Heart right ventricle (tissue), 16 donors: ENCODE measurements at regions of chr12 and their contacts with region 1.

Region 1: GRCh38 chr12:121536899-121537813 is 43.7 kb downstream of the KDM2B start:
- DNase-seq: peak; percentile 89 to 90
- ATAC-seq: peak; percentile 82 to 90 (median 86)
- H3K4me3 ChIP-seq: peak overlapping the region; percentile 56 to 94 (median 77)
- H3K27ac ChIP-seq: peak overlapping the region; percentile 87 to 100 (median 96)
- H3K4me1 ChIP-seq: peaks cover 12 to 63% (median 48%) of the 10 kb centered on the region in 9 donors
- H3K27me3 ChIP-seq: no peaks in the 10 kb centered on the region
- CTCF ChIP-seq: no peak

Region 2: GRCh38 chr12:121114019-121114639 is 423.0 kb before region 1 on chr12:
- intact Hi-C with region 1: no loop called
- DNase-seq: no peak
- ATAC-seq: no peak
- H3K4me3 ChIP-seq: no peak overlapping the region
- H3K27ac ChIP-seq: no peak overlapping the region
- H3K4me1 ChIP-seq: peaks cover 0 to 7% (median 0%) of the 10 kb centered on the region in 9 donors
- H3K27me3 ChIP-seq: no peaks in the 10 kb centered on the region
- CTCF ChIP-seq: no peak

Region 3: DNA sequence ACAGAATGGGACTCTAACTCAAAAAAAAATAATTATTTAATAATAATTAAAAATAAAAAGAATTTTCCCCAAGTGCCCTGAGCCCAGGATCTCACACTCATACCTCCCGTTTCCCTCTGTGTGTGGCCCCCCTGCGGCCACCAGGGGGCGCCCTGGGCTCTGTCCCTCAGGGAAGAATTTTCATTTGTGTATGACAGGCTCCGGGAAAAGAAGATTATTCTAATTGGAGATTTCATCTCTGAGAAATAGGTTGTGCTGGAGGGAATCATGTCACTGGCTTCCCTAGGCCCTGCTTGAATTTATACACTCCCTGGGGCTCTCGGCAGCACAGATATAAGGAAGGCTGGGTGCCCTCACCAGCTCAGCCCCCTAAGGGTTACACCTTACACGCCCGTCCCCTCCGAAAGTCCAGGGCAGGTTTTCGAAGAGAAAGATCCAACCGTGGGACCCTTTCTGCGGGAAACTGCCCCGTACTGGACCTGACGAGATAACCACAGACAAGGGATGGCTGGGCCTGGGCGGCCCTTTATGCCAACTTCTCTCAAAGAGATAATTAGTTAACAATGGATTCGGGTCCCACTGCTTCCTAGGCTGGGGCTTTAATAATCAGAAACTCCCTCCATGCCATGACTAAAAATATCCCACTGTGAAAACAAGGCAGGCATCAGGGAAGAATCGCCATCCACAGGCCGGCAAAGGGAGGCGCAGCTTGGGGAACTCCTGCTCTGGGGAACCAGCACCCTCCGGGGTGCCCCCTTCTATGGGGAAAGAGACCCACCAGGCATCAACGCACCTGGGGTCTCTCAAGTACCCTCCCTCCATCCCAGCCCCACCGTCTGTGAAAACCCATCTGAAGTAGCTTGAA is 37.0 kb before region 1 on chr12:
- intact Hi-C with region 1: loop called in 4 of 10 experiments (anchors 2 to 5 kb)
- DNase-seq: peak; percentile 79 to 81
- ATAC-seq: peak; percentile 81 to 93 (median 88)
- H3K4me3 ChIP-seq: peak overlapping the region in 9 of 10 donors; percentile 10 to 45 (median 36)
- H3K27ac ChIP-seq: peak overlapping the region in 9 of 10 donors; percentile 50 to 85 (median 78)
- H3K4me1 ChIP-seq: peaks cover 0 to 28% (median 12%) of the 10 kb centered on the region in 9 donors
- H3K27me3 ChIP-seq: no peaks in the 10 kb centered on the region
- CTCF ChIP-seq: peak; percentile 96 to 99 (median 99)

Region 4: GRCh38 chr12:121579981-121580868 is 43.1 kb after region 1 on chr12:
- intact Hi-C with region 1: loop called in 1 of 10 experiments (anchors 5 kb)
- DNase-seq: peak; percentile 68 to 77
- ATAC-seq: peak; percentile 57 to 76 (median 70)
- H3K4me3 ChIP-seq: peak overlapping the region; percentile 42 to 92 (median 74)
- H3K27ac ChIP-seq: peak overlapping the region; percentile 66 to 93 (median 84)
- H3K4me1 ChIP-seq: peaks cover 13 to 57% (median 48%) of the 10 kb centered on the region in 9 donors
- H3K27me3 ChIP-seq: no peaks in the 10 kb centered on the region
- CTCF ChIP-seq: no peak

Region 5: GRCh38 chr12:121811434-121812319 is 274.5 kb after region 1 on chr12:
- intact Hi-C with region 1: no loop called
- DNase-seq: peak; percentile 67 to 79
- ATAC-seq: peak; percentile 86 to 94 (median 90)
- H3K4me3 ChIP-seq: peak overlapping the region; percentile 31 to 68 (median 60)
- H3K27ac ChIP-seq: peak overlapping the region in 9 of 10 donors; percentile 38 to 82 (median 63)
- H3K4me1 ChIP-seq: peaks cover 18 to 56% (median 48%) of the 10 kb centered on the region in 9 donors
- H3K27me3 ChIP-seq: no peaks in the 10 kb centered on the region
- CTCF ChIP-seq: peak in 8 of 9 donors; percentile 97 to 99 (median 99)